ENCODE measurements at regions of chr17 and their contacts with region 1.

Region 1: DNA sequence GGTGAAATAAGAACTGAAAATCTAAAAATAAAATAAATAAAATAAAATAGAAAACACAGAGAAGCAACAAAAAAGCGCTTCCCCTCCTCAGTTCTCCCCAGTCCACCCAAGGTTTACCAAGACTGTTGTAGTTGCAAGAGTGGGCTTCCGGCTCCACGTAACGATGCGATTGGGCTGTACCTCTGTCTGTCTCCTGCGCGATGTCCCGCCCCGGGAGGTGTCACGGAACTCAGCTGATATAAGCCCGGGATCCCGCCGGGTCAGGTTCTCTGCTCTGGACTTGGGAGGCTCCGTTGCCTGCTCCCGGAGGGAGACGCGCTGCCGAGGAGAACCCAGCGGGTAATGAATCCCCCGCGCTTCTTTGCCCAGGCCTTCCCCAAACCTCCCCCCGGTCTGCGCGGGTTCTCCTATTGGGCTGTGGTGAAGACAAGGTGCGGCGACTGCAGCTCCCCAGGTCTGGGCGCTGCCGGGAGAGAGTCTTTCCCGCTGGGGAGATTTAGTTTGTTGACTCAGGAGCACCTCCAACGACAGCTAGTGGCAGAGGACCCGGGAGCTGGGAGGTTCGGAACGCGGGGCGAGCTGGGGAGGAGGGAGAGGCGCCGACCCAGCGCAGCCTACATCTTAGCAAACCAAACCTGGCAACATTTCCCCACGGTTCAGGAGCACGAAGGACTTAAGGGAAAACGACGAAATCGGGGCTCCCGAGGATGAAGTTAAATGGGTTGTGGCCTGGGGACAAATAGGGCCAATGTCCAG is at the start of gene SLFN5:
- DNase-seq: peak; percentile 95
- H3K4me3 ChIP-seq: peak within 1 kb of the TSS; percentile 52 to 68 (median 58)
- H3K27ac ChIP-seq: peak within 1 kb of the TSS; percentile 82
- H3K4me1 ChIP-seq: peaks cover 27% of the 10 kb centered on the region
- H3K27me3 ChIP-seq: peaks cover 0 to 6% of the 10 kb centered on the region in 2 experiments
- CTCF ChIP-seq: no peak
- POLR2A ChIP-seq: peak; percentile 98
- total RNA-seq, gene SLFN5: 15.7 and 24.2 TPM in 2 replicates

Region 2: GRCh38 chr17:34961093-34961911 is 281.7 kb before region 1 on chr17 and contains the starts of genes CCT6B and ZNF830:
- CTCF ChIA-PET with region 1: no interaction called
- POLR2A ChIA-PET with region 1: no interaction called
- dilution Hi-C with region 1: no loop called
- intact Hi-C with region 1: loop called (anchors 10 kb)
- DNase-seq: peak; percentile 96
- H3K4me3 ChIP-seq: peak within 1 kb of the TSS; percentile 29 to 84 (median 80)
- H3K27ac ChIP-seq: peak within 1 kb of the TSS; percentile 76
- H3K4me1 ChIP-seq: peaks cover 18% of the 10 kb centered on the region
- H3K27me3 ChIP-seq: peaks cover under 1 to 1% of the 10 kb centered on the region in 2 experiments
- CTCF ChIP-seq: no peak
- POLR2A ChIP-seq: peak; percentile 74
- total RNA-seq, gene CCT6B: 0.78 and 1.6 TPM in 2 replicates
- total RNA-seq, gene ZNF830: 13.9 and 15.0 TPM in 2 replicates

Region 3: GRCh38 chr17:35170968-35171771 is 71.8 kb before region 1 on chr17:
- CTCF ChIA-PET with region 1: interaction called, 6 read pairs
- POLR2A ChIA-PET with region 1: no interaction called
- dilution Hi-C with region 1: no loop called
- intact Hi-C with region 1: loop called (anchors 5 kb)
- DNase-seq: peak; percentile 53
- H3K4me3 ChIP-seq: no peak overlapping the region
- H3K27ac ChIP-seq: no peak overlapping the region
- H3K4me1 ChIP-seq: no peaks in the 10 kb centered on the region
- H3K27me3 ChIP-seq: peaks cover 0 to 3% of the 10 kb centered on the region in 2 experiments
- CTCF ChIP-seq: no peak
- POLR2A ChIP-seq: no peak

Region 4: GRCh38 chr17:35273684-35274083 is 30.7 kb after region 1 on chr17:
- CTCF ChIA-PET with region 1: no interaction called
- POLR2A ChIA-PET with region 1: no interaction called
- dilution Hi-C with region 1: no loop called
- intact Hi-C with region 1: no loop called
- DNase-seq: no peak
- H3K4me3 ChIP-seq: no peak overlapping the region
- H3K27ac ChIP-seq: no peak overlapping the region
- H3K4me1 ChIP-seq: no peaks in the 10 kb centered on the region
- H3K27me3 ChIP-seq: no peaks in the 10 kb centered on the region
- CTCF ChIP-seq: no peak
- POLR2A ChIP-seq: no peak

Region 5: GRCh38 chr17:35312790-35313711 is 70.1 kb after region 1 on chr17:
- CTCF ChIA-PET with region 1: interaction called, 6 read pairs
- POLR2A ChIA-PET with region 1: no interaction called
- dilution Hi-C with region 1: no loop called
- intact Hi-C with region 1: loop called (anchors 1 kb)
- DNase-seq: peak; percentile 71
- H3K4me3 ChIP-seq: no peak overlapping the region
- H3K27ac ChIP-seq: no peak overlapping the region
- H3K4me1 ChIP-seq: peaks cover 3% of the 10 kb centered on the region
- H3K27me3 ChIP-seq: no peaks in the 10 kb centered on the region
- CTCF ChIP-seq: peak; percentile 67
- POLR2A ChIP-seq: no peak

Region 6: GRCh38 chr17:35432176-35433074 is 189.4 kb after region 1 on chr17 and contains the start of gene SLFN12:
- CTCF ChIA-PET with region 1: no interaction called
- POLR2A ChIA-PET with region 1: no interaction called
- dilution Hi-C with region 1: no loop called
- intact Hi-C with region 1: loop called (anchors 1 kb)
- DNase-seq: peak; percentile 96
- H3K4me3 ChIP-seq: peak within 1 kb of the TSS; percentile 55 to 92 (median 82)
- H3K27ac ChIP-seq: peak within 1 kb of the TSS; percentile 96
- H3K4me1 ChIP-seq: peaks cover 23% of the 10 kb centered on the region
- H3K27me3 ChIP-seq: no peaks in the 10 kb centered on the region
- CTCF ChIP-seq: no peak
- POLR2A ChIP-seq: peak; percentile 92
- total RNA-seq, gene SLFN12: 29.9 and 42.6 TPM in 2 replicates

Measured in endothelial cell of umbilical vein (primary cell).